ENCODE measurements at regions of chr15 and their contacts with region 1.

Region 1: GRCh38 chr15:64582202-64582601 is 121.8 kb downstream of the ZNF609 start:
- DNase-seq: no peak
- H3K4me3 Mint-ChIP-seq: no peak overlapping the region
- H3K27ac Mint-ChIP-seq: no peak overlapping the region
- H3K4me1 Mint-ChIP-seq: peaks cover 29% of the 10 kb centered on the region
- H3K27me3 Mint-ChIP-seq: no peaks in the 10 kb centered on the region

Region 2: GRCh38 chr15:64622410-64623260 is 40.4 kb after region 1 on chr15:
- intact Hi-C with region 1: loop called (anchors 5 kb)
- DNase-seq: peak; percentile 48
- H3K4me3 Mint-ChIP-seq: peak overlapping the region; percentile 53
- H3K27ac Mint-ChIP-seq: peak overlapping the region; percentile 80
- H3K4me1 Mint-ChIP-seq: peaks cover 76% of the 10 kb centered on the region
- H3K27me3 Mint-ChIP-seq: no peaks in the 10 kb centered on the region

Region 3: DNA sequence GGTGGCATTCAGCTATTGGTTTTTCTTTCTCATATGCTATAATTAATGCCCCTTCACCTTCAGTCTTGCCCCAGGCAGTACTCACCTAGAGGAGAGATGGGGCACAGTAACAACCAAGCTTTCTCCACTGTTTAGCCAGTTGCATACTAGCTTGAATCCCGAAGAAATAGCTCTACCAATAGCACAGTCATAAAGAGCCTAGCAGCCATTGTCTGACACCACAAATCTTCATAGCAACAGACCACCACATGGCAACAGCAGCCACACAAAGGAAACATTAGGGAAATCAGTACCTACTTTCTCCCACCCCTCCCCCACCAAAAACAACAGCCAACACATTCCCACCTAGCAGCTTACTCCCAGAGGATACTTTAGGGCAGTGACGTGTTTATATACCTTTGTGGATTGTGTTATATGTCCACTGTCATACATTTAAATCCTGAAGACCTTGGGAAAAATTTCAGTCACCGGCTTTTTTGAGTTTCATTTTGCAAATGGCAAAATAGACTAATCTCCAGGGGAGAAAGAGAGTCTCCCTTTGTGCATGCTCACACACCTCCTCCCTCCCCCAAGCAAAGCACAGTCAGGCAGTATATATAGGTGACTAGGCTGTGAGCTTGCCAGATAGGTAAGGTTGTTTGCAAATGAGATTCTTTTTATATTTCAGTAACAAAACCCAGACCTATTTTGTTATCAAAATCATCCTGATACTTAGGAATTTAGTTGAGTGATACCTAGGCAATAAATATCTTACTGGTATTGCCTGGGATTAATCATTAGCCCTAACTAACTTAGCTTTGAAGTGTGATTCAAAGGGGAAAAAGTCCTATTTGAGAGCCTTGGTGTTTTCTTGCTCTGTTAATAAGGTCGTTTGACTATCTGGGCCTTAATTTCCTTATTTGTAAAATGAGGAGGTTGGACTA is 52.6 kb after region 1 on chr15:
- intact Hi-C with region 1: loop called (anchors 2 kb)
- DNase-seq: peak; percentile 41
- H3K4me3 Mint-ChIP-seq: peak overlapping the region; percentile 42
- H3K27ac Mint-ChIP-seq: peak overlapping the region; percentile 80
- H3K4me1 Mint-ChIP-seq: peaks cover 51% of the 10 kb centered on the region
- H3K27me3 Mint-ChIP-seq: no peaks in the 10 kb centered on the region

Measured in activated T-helper 1 cell treated with anti-CD3 and anti-CD28 coated beads, Interleukin-12 subunit alpha, Interleukin-12 subunit beta, Interleukin-2, Interleukin-4 antibody, amounts not matched to agents 30 ng/mL and 10 ng/mL and 1 ng/mL, durations not matched to agents 14 hours and 24 hours and 36 hours (primary cell).